BJ (cell line): ENCODE measurements at regions of chr14 and their contacts with region 1.

Region 1: GRCh38 chr14:30443368-30444007 is 115.5 kb upstream of the G2E3 start:
- DNase-seq: no peak
- H3K4me3 ChIP-seq: no peak overlapping the region
- H3K27me3 ChIP-seq: no peaks in the 10 kb centered on the region
- CTCF ChIP-seq: peak; percentile 30; the same call in 1 of the 2 replicates

Region 2: DNA sequence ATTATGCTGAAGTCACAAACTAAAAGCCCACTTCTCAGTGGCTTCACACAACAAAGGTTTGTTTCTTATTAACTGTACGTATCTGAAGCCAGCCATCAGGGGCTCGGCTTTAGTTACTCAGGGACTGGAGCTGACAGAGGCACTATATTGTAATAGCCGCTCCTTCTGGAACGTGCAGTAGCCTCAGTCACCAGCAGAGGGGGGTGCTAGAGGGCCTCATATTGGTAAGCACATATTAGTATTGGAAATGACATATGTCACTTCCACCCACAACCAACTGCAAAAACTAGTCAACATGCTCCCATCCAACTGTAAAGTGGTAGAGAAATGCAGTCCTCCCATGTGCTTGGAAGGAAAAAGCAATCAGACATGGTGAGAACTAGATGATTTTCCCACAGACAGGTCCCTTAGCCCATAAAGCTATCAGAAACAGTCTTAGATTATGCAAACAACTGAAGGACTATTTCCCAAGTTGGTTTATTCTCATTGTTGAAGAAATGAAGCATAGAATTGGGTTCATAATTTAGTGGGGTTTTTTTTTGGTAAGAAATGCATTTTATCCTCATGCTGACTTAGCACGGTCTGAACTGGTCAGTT is 68.1 kb before region 1 on chr14:
- CTCF ChIA-PET with region 1: interaction called, 10 read pairs
- POLR2A ChIA-PET with region 1: no interaction called
- DNase-seq: no peak
- H3K4me3 ChIP-seq: no peak overlapping the region
- H3K27me3 ChIP-seq: no peaks in the 10 kb centered on the region; the same call in 1 of the 2 replicates
- CTCF ChIP-seq: peak; percentile 92